GM12878 (cell line): ENCODE measurements at regions of chr6 and their contacts with region 1.

Region 1: DNA sequence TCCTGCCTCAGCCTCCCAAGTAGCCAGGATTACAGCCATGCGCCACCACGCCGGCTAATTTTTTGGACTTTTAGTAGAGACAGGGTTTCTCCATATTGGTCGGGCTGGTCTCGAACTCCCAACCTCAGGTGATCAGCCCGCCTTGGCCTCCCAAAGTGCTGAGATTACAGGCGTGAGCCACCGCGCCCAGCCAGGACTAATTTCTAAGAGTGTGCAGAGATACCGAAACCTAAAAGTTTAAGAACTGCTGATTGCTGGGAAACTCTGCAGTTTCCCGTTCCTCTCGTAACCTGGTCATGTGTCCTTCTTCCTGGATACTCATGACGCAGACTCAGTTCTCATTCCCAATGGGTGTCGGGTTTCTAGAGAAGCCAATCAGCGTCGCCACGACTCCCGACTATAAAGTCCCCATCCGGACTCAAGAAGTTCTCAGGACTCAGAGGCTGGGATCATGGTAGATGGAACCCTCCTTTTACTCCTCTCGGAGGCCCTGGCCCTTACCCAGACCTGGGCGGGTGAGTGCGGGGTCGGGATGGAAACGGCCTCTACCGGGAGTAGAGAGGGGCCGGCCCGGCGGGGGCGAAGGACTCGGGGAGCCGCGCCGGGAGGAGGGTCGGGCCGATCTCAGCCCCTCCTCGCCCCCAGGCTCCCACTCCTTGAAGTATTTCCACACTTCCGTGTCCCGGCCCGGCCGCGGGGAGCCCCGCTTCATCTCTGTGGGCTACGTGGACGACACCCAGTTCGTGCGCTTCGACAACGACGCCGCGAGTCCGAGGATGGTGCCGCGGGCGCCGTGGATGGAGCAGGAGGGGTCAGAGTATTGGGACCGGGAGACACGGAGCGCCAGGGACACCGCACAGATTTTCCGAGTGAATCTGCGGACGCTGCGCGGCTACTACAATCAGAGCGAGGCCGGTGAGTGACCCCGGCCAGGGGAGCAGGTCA is at the start of gene HLA-E:
- DNase-seq: peak; percentile 99
- ATAC-seq: peak; percentile 87
- H3K4me3 ChIP-seq: peak within 1 kb of the TSS; percentile 94
- H3K27ac ChIP-seq: peak within 1 kb of the TSS; percentile 93
- H3K4me1 ChIP-seq: peaks cover 18% of the 10 kb centered on the region
- H3K27me3 ChIP-seq: no peaks in the 10 kb centered on the region
- CTCF ChIP-seq: no peak
- EP300 ChIP-seq: no peak
- POLR2A ChIP-seq: peak; percentile 94
- RAD21 ChIP-seq: no peak
- polyA plus RNA-seq, gene HLA-E: 35.1 to 62.3 TPM

Region 2: GRCh38 chr6:29685718-29686326 is 803.5 kb before region 1 on chr6:
- CTCF ChIA-PET with region 1: no interaction called
- POLR2A ChIA-PET with region 1: no interaction called
- RAD21 ChIA-PET with region 1: no interaction called
- SMC1A ChIA-PET with region 1: no interaction called
- in situ Hi-C with region 1: no loop called
- intact Hi-C with region 1: no loop called
- DNase-seq: no peak
- ATAC-seq: no peak
- H3K4me3 ChIP-seq: no peak overlapping the region
- H3K27ac ChIP-seq: no peak overlapping the region
- H3K4me1 ChIP-seq: no peaks in the 10 kb centered on the region
- H3K27me3 ChIP-seq: no peaks in the 10 kb centered on the region
- CTCF ChIP-seq: no peak
- EP300 ChIP-seq: no peak
- POLR2A ChIP-seq: no peak
- RAD21 ChIP-seq: no peak

Region 3: DNA sequence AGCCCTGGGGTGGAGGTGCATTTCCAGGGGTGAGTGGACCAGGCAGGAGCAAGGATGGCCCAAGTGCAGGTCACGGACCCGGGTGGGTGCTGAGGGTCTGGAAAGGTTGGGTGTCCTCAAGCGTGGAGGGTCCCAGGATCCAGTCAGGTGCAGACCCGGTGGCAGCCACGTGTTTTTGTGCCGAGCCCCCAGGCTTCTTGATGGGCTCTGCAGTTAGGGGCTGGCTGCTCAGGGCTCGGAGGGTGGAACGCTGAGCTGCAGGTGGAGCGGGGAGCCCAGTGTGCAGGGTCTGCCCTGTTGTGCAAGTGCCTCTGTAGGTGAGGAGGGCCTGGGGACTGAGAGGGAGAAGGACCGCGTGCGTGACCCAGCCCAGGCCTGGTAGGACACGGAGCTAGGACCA is 70.9 kb before region 1 on chr6:
- CTCF ChIA-PET with region 1: no interaction called
- POLR2A ChIA-PET with region 1: no interaction called
- RAD21 ChIA-PET with region 1: no interaction called
- SMC1A ChIA-PET with region 1: no interaction called
- in situ Hi-C with region 1: no loop called
- intact Hi-C with region 1: no loop called
- DNase-seq: no peak
- ATAC-seq: no peak
- H3K4me3 ChIP-seq: no peak overlapping the region
- H3K27ac ChIP-seq: no peak overlapping the region
- H3K4me1 ChIP-seq: no peaks in the 10 kb centered on the region
- H3K27me3 ChIP-seq: peaks cover 6% of the 10 kb centered on the region in 2 experiments
- CTCF ChIP-seq: no peak
- EP300 ChIP-seq: no peak
- POLR2A ChIP-seq: no peak
- RAD21 ChIP-seq: no peak

Region 4: GRCh38 chr6:30508890-30509736 is 19.8 kb after region 1 on chr6:
- CTCF ChIA-PET with region 1: interaction called, 23 read pairs
- POLR2A ChIA-PET with region 1: interaction called, 16 read pairs
- RAD21 ChIA-PET with region 1: interaction called, 7 read pairs
- SMC1A ChIA-PET with region 1: interaction called, 14 read pairs
- in situ Hi-C with region 1: no loop called
- intact Hi-C with region 1: loop called (anchors 2 kb)
- DNase-seq: peak; percentile 79
- ATAC-seq: peak; percentile 76
- H3K4me3 ChIP-seq: peak overlapping the region; percentile 31
- H3K27ac ChIP-seq: peak overlapping the region; percentile 97
- H3K4me1 ChIP-seq: peaks cover 53% of the 10 kb centered on the region
- H3K27me3 ChIP-seq: no peaks in the 10 kb centered on the region
- CTCF ChIP-seq: no peak
- EP300 ChIP-seq: no peak
- POLR2A ChIP-seq: no peak
- RAD21 ChIP-seq: no peak